Mammary epithelial cell (primary cell): ENCODE measurements at regions of chr1 and their contacts with region 1.

Region 1: GRCh38 chr1:18581420-18581880 is 49.2 kb upstream of the PAX7 start:
- DNase-seq: no peak
- H3K4me3 ChIP-seq: no peak overlapping the region
- H3K27ac ChIP-seq: no peak overlapping the region
- H3K4me1 ChIP-seq: peaks cover 4% of the 10 kb centered on the region
- H3K27me3 ChIP-seq: no peaks in the 10 kb centered on the region
- CTCF ChIP-seq: peak; percentile 70 to 86

Region 2: DNA sequence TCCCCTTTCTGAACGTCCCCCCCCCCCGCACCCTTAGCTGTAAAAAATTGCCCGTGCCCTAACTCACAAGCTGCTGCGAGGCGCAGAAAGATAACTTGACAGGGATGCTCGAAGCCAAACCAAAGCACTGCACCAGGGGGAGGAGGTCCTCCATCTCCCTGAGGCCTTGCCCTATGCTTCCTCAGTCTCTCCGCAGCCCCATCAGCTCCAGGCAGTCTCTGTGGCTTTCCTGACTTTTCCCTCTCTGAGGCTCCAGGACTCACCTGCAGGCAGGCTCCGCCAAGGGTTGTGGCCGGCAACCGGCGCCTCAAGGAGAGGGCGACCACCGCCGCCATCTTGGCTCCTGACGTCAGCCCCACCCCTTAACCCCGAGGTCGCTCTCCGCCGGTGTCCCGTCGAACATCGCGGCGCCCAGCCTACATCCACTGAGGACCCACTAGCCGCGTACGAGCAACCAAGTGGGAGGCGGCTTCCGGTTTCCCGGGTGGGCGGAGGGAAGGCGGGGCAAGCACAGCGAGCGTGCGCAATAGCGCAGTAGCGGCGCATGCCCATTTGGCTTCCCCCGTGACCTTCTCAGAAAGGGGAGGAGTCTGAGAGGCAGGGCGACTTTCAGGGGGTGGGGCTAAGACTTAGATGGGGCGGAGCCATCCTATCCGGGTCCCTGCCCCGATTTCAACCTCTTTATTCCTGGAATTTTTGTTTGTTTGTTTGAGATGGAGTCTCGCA is 1527.6 kb before region 1 on chr1 and contains the start of gene SDHB:
- CTCF ChIA-PET with region 1: no interaction called
- dilution Hi-C with region 1: no loop called
- in situ Hi-C with region 1: no loop called
- intact Hi-C with region 1: loop called (anchors 10 kb)
- DNase-seq: peak; percentile 97
- H3K4me3 ChIP-seq: peak within 1 kb of the TSS; percentile 78 to 96 (median 81)
- H3K27ac ChIP-seq: peak within 1 kb of the TSS; percentile 65
- H3K4me1 ChIP-seq: peaks cover 14% of the 10 kb centered on the region
- H3K27me3 ChIP-seq: no peaks in the 10 kb centered on the region
- CTCF ChIP-seq: no peak
- total RNA-seq, gene SDHB: 73.5 to 106 TPM

Region 3: GRCh38 chr1:17502326-17502778 is 1079.1 kb before region 1 on chr1:
- CTCF ChIA-PET with region 1: no interaction called
- dilution Hi-C with region 1: no loop called
- in situ Hi-C with region 1: no loop called
- intact Hi-C with region 1: loop called (anchors 1 kb)
- DNase-seq: peak; percentile 52
- H3K4me3 ChIP-seq: no peak overlapping the region
- H3K27ac ChIP-seq: no peak overlapping the region
- H3K4me1 ChIP-seq: no peaks in the 10 kb centered on the region
- H3K27me3 ChIP-seq: no peaks in the 10 kb centered on the region
- CTCF ChIP-seq: peak; percentile 90 to 96

Region 4: DNA sequence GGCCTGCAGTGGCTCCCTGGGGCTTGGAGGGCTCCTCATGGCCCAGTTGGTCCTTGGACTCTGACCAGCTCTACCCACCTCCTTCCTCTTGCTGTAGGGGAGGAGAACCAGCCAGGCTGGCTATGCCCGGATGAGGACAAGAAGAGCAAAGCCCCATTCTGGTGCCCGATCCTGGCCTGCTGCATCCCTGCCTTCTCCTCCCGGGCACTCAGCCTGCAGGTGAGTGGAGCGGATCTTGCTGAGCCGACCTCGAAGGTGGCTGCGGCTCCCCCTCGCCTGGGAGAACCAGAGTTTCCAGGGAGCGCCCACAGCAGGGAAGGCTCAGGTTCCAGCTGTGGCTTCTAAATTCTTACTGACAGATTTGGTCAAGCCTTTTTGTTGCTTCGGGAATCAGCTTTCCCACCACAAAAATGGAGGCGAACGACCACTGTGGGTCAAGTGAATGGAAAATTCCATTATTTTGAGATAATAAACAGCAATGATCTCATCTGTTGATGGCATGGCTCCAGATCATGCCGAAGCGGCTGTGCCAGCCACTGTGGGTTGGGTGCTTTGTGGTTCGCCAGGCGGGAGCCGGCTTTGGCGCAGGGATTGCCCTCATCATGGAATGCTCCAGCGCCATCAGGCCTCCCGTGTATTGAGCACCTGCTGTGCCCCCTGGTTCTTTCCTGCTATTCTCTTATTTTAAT is 932.8 kb before region 1 on chr1:
- CTCF ChIA-PET with region 1: interaction called, 5 read pairs
- dilution Hi-C with region 1: no loop called
- in situ Hi-C with region 1: loop called (anchors 10 kb)
- intact Hi-C with region 1: loop called (anchors 1 kb)
- DNase-seq: peak; percentile 19
- H3K4me3 ChIP-seq: no peak overlapping the region
- H3K27ac ChIP-seq: no peak overlapping the region
- H3K4me1 ChIP-seq: no peaks in the 10 kb centered on the region
- H3K27me3 ChIP-seq: no peaks in the 10 kb centered on the region
- CTCF ChIP-seq: no peak

Region 5: GRCh38 chr1:17653728-17654351 is 927.6 kb before region 1 on chr1:
- CTCF ChIA-PET with region 1: interaction called, 5 read pairs
- dilution Hi-C with region 1: no loop called
- in situ Hi-C with region 1: loop called (anchors 10 kb)
- intact Hi-C with region 1: loop called (anchors 1 kb)
- DNase-seq: no peak
- H3K4me3 ChIP-seq: no peak overlapping the region
- H3K27ac ChIP-seq: no peak overlapping the region
- H3K4me1 ChIP-seq: no peaks in the 10 kb centered on the region
- H3K27me3 ChIP-seq: no peaks in the 10 kb centered on the region
- CTCF ChIP-seq: peak; percentile 70 to 80

Region 6: DNA sequence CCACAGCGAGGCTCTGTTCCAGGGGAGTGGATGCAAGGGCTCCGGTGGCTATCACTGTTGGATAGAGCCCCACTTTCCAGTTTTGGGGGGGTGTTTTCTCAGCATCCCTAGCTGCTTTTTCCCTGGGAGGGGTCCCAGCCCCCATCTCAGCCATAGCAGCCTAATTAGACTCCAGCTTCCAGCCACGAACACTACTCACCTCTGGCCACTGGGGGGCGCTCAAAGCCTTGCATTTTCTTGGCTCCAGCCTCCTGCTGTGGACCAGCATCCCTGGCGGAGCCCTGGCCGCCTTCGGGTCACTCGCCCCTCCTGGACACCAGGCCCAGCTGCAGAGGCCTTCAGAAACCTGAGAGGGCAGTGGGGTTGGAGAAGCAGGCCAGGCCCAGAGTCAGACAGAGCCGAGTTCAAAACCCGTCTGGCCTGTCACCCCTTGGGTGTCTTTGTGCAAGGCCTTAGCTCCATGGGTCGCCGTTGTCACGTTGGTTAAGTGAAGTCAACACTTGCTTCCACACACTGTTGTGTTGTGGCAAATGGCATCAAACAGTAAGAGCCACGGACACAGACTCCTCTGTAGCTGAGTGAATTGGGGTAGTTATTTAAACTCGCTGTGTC is 919.8 kb before region 1 on chr1:
- CTCF ChIA-PET with region 1: no interaction called
- dilution Hi-C with region 1: no loop called
- in situ Hi-C with region 1: no loop called
- intact Hi-C with region 1: loop called (anchors 1 kb)
- DNase-seq: peak; percentile 34
- H3K4me3 ChIP-seq: no peak overlapping the region
- H3K27ac ChIP-seq: no peak overlapping the region
- H3K4me1 ChIP-seq: no peaks in the 10 kb centered on the region
- H3K27me3 ChIP-seq: no peaks in the 10 kb centered on the region
- CTCF ChIP-seq: peak; percentile 75 to 84

Region 7: DNA sequence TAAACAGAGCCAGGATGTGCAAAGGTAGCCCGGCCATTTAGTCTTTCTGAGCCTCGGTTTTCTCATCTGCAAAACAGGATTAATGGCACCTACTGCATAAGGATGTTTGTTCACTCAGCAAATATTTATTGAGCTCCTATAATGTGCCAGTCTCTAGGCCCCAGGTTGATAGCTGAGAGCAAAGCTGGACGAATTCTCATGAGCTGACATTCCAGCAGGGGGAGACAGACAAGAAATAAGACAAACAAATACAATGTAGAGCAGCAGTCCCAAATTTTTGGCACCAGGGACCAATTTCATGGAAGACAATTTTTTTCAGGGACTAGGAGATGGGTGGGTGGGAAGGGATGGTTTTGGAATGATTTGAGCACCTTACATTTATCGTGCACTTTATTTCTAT is 25.1 kb before region 1 on chr1:
- CTCF ChIA-PET with region 1: no interaction called
- dilution Hi-C with region 1: no loop called
- in situ Hi-C with region 1: no loop called
- intact Hi-C with region 1: loop called (anchors 1 kb)
- DNase-seq: no peak
- H3K4me3 ChIP-seq: no peak overlapping the region
- H3K27ac ChIP-seq: no peak overlapping the region
- H3K4me1 ChIP-seq: no peaks in the 10 kb centered on the region
- H3K27me3 ChIP-seq: peaks cover 5% of the 10 kb centered on the region
- CTCF ChIP-seq: peak; percentile 33 to 47